ENCODE measurements at regions of chr12 and their contacts with region 1.

Region 1: GRCh38 chr12:101939856-101940265 is 62.5 kb downstream of the DRAM1 start:
- DNase-seq: peak; percentile 83
- ATAC-seq: peak; percentile 68
- H3K4me3 ChIP-seq: no peak overlapping the region
- H3K27ac ChIP-seq: no peak overlapping the region
- H3K4me1 ChIP-seq: peaks cover 13% of the 10 kb centered on the region
- H3K27me3 ChIP-seq: no peaks in the 10 kb centered on the region
- CTCF ChIP-seq: peak; percentile 94
- POLR2A ChIP-seq: no peak
- RAD21 ChIP-seq: peak; percentile 92

Region 2: GRCh38 chr12:101773650-101774162 is 166.2 kb before region 1 on chr12:
- CTCF ChIA-PET with region 1: no interaction called
- POLR2A ChIA-PET with region 1: no interaction called
- dilution Hi-C with region 1: no loop called
- in situ Hi-C with region 1: no loop called
- intact Hi-C with region 1: loop called (anchors 1 kb)
- DNase-seq: peak; percentile 75
- ATAC-seq: peak; percentile 98
- H3K4me3 ChIP-seq: no peak overlapping the region
- H3K27ac ChIP-seq: no peak overlapping the region
- H3K4me1 ChIP-seq: peaks cover 2% of the 10 kb centered on the region; the same call in 1 of the 2 replicates
- H3K27me3 ChIP-seq: no peaks in the 10 kb centered on the region
- CTCF ChIP-seq: peak; percentile 97
- POLR2A ChIP-seq: no peak
- RAD21 ChIP-seq: peak; percentile 93

Region 3: GRCh38 chr12:102033991-102034745 is 94.3 kb after region 1 on chr12:
- CTCF ChIA-PET with region 1: no interaction called
- POLR2A ChIA-PET with region 1: no interaction called
- dilution Hi-C with region 1: no loop called
- in situ Hi-C with region 1: no loop called
- intact Hi-C with region 1: no loop called
- DNase-seq: peak; percentile 58
- ATAC-seq: no peak
- H3K4me3 ChIP-seq: no peak overlapping the region
- H3K27ac ChIP-seq: no peak overlapping the region
- H3K4me1 ChIP-seq: no peaks in the 10 kb centered on the region
- H3K27me3 ChIP-seq: no peaks in the 10 kb centered on the region
- CTCF ChIP-seq: no peak
- POLR2A ChIP-seq: no peak
- RAD21 ChIP-seq: no peak

Region 4: DNA sequence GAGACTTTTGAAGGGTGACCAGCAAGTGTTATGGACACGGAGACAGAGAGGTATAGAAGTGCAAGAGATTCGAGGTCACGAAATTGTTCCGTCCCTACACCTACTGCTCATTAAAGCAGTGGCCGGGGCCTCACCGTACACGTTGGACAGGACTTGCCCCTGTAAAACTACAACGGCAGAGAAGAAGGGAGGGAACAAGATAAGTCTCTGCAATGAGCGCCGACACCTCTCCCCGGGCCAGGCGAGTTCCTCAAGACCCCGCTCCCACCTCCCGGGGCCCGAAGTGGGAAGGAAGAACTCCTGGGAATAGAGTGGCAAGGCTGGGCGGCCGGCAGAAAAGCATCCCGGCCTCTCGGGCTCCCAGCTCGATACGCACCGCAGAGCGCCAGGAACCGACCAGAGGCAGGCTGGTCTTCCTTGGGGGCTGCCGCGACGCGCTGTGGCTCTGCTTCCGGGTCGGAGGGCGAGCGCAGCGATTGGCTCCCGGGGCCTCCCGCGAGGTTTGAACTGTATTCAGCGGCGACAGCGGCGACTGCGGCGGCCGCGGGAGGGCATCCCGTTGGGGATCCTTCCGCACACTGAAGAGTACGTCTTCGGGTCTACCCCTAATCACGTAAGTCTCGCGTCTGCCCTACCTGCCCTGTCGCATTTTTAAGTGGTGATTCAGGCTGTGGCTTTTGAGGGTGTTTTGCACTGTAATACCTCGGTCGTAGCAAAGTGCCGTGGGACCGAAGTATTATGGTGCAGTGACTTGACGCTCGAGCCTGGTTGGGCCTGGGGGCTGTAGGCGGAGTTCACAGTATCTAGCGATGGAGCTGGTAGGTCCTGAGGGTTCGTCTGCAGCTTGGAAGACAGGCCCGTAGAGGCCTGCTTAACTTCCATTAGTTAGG is 180.1 kb after region 1 on chr12 and contains the starts of genes NUP37 and PARPBP:
- CTCF ChIA-PET with region 1: interaction called, 5 read pairs
- POLR2A ChIA-PET with region 1: interaction called, 3 read pairs
- dilution Hi-C with region 1: no loop called
- in situ Hi-C with region 1: no loop called
- intact Hi-C with region 1: loop called (anchors 1 kb)
- DNase-seq: peak; percentile 81
- ATAC-seq: peak; percentile 98
- H3K4me3 ChIP-seq: peak within 1 kb of the TSS; percentile 86
- H3K27ac ChIP-seq: peak within 1 kb of the TSS; percentile 75
- H3K4me1 ChIP-seq: peaks cover 4% of the 10 kb centered on the region; the same call in 1 of the 2 replicates
- H3K27me3 ChIP-seq: no peaks in the 10 kb centered on the region
- CTCF ChIP-seq: no peak
- POLR2A ChIP-seq: peak; percentile 77
- RAD21 ChIP-seq: no peak
- total RNA-seq, gene NUP37: 55.0 and 71.9 TPM in 2 replicates
- total RNA-seq, gene PARPBP: 7.2 and 15.6 TPM in 2 replicates

Region 5: DNA sequence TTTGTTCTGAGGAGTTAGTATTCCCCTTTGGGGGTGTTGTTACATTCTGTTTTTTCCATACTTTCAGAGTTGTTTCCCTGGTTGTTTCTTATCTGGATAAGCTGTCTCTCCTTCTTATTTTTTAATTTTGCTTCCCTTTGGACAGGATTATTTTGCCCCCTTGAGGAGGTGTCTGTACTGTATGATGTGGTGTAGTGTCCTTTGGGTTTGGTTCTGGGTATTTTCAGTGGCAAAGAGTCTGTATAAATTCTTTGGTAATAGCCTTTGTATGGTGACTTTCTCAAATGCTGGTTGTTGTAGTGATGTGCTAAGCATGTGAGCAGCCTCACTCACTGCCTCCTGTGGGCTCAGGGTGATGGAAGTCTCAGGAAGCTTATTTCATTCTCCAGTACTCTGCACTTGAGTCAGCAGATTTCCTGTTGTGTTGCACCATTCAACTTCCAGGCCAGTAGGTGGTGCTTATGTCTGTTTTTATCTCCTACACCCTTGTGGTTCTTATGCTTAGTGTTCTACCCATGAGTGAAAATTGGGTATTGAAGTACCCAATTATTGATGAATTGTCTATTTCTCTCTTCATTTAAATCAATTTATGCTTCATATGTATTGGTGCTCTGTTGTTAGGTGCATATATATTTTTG is 361.1 kb after region 1 on chr12:
- CTCF ChIA-PET with region 1: no interaction called
- POLR2A ChIA-PET with region 1: no interaction called
- dilution Hi-C with region 1: no loop called
- in situ Hi-C with region 1: no loop called
- intact Hi-C with region 1: loop called (anchors 5 kb)
- DNase-seq: peak; percentile 73
- ATAC-seq: peak; percentile 80
- H3K4me3 ChIP-seq: no peak overlapping the region
- H3K27ac ChIP-seq: no peak overlapping the region
- H3K4me1 ChIP-seq: no peaks in the 10 kb centered on the region
- H3K27me3 ChIP-seq: no peaks in the 10 kb centered on the region
- CTCF ChIP-seq: peak; percentile 57
- POLR2A ChIP-seq: no peak
- RAD21 ChIP-seq: peak; percentile 65

Region 6: DNA sequence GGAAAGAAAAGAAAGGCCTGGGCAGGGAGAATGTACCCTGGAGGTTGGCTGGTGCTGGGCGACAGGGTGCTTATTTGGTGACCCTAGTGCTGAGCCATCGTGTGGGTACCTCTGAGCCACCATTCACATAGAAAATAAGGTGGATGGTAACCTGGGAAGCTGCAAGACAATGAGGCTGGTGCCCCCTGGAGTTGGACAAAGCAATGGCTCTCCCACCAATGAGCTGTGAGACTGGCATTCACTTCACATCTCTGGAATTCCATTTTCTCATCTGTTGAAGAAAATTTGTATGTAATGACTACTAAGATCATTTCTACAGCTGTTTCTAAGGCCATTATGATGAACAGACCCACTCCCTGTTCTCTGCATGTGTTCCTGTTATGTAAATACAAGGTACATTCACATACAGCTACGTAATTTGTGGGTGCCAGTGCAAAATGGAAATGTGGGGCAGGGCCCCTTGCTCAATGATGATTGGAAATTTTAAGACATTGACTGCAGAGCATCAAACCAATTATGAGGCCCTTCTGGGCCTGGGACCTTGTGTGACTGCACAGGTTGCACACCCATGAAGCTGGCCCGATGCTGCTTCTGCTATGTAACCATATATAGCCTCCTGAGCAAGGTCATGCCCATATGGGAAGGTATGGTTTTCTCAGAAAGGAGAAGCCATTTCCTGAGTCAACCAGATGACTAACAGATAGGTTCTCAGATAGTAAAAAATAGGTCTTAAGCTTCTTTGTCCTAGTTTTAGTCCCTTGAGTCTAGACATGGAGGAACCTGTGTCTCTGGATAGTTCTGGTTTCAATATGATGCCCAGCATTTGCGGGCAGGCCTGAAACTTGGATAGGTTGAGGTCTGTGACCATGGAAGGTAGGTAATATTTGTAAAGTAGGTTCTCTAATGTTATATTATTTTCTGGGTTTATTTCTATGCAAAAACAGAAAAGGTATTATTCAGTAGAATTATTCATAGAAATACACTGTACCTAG is 603.9 kb after region 1 on chr12:
- CTCF ChIA-PET with region 1: interaction called, 3 read pairs
- POLR2A ChIA-PET with region 1: no interaction called
- dilution Hi-C with region 1: no loop called
- in situ Hi-C with region 1: no loop called
- intact Hi-C with region 1: loop called (anchors 5 kb)
- DNase-seq: peak; percentile 28
- ATAC-seq: no peak; the same call in 1 of the 2 replicates
- H3K4me3 ChIP-seq: no peak overlapping the region
- H3K27ac ChIP-seq: no peak overlapping the region
- H3K4me1 ChIP-seq: peaks cover 18% of the 10 kb centered on the region
- H3K27me3 ChIP-seq: no peaks in the 10 kb centered on the region
- CTCF ChIP-seq: no peak; the same call in 1 of the 2 replicates
- POLR2A ChIP-seq: no peak
- RAD21 ChIP-seq: 0 out of 2 replicates have a peak, but pooled peaks have one; percentile 29

Region 7: DNA sequence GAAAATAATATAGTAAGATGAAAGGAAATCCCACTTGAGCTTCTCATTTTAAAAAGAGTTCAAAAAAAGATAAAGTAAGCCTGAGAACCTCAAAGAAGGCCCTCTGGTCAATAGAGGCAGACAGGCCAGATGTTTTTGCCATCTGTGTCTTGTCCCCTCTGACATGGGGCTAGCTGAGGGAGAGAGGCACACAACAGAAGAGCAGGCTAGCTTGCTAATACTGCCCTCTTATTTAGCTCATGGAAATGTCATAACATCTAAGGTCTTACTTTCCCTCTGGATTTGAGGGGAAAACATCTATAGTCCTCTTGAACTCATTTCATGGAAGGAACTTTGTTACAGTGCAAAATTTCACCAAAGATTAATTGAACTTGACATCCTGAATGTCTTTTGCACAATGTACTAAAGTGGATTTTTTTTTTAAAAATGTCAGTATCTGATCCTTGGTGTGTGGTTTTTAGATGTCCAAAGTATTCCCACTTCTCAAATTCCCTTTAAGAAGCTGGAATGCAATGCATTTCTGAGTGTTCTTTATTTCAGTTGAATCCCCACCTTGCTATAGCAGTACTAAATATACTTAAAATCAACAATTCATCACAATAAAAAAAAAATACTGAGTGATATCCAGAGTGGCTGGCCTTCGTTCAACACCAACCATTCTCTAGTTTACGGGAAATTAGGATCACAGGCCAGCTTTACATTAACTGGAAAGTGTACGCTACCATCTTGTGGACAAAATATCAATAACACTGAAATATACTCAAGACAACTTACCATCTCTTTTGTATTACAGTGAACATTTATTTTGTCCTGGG is 800.5 kb after region 1 on chr12:
- CTCF ChIA-PET with region 1: interaction called, 5 read pairs
- POLR2A ChIA-PET with region 1: no interaction called
- dilution Hi-C with region 1: no loop called
- in situ Hi-C with region 1: no loop called
- intact Hi-C with region 1: loop called (anchors 1 kb)
- DNase-seq: peak; percentile 36
- ATAC-seq: peak; percentile 68; the same call in 1 of the 2 replicates
- H3K4me3 ChIP-seq: no peak overlapping the region
- H3K27ac ChIP-seq: no peak overlapping the region
- H3K4me1 ChIP-seq: no peaks in the 10 kb centered on the region
- H3K27me3 ChIP-seq: no peaks in the 10 kb centered on the region
- CTCF ChIP-seq: peak; percentile 46
- POLR2A ChIP-seq: no peak
- RAD21 ChIP-seq: peak; percentile 63

Region 8: DNA sequence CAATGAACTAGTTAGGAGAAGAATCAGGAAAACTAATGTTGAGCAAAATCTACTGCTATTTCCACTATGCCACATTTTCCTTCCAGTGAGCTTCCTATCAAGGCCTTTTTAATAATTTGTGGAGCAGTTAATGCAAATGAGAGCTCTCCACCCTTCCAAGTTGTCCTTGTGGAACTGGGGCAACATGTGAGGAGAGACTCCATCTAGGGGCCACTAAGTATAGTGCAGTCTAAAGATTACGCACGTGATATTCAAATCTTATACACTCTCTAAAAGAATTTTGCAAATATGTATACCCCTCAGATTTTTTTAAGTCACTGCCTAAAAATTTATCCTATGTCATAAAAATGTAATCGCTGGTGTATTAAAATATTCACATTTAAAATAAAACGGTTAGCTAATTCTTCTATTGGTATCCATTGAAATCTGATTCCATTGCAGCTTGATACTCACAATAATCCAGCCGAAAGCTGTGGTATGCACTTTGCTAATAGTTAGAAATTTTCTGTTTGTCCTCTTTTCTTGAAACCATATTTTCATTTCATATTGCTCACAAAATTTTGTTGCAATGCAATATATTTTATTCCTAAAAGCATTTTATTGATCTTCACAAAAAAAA is 877.1 kb after region 1 on chr12:
- CTCF ChIA-PET with region 1: interaction called, 3 read pairs
- POLR2A ChIA-PET with region 1: no interaction called
- dilution Hi-C with region 1: no loop called
- in situ Hi-C with region 1: no loop called
- intact Hi-C with region 1: loop called (anchors 1 kb)
- DNase-seq: peak; percentile 29
- ATAC-seq: peak; percentile 88
- H3K4me3 ChIP-seq: no peak overlapping the region
- H3K27ac ChIP-seq: no peak overlapping the region
- H3K4me1 ChIP-seq: no peaks in the 10 kb centered on the region
- H3K27me3 ChIP-seq: no peaks in the 10 kb centered on the region
- CTCF ChIP-seq: peak; percentile 54
- POLR2A ChIP-seq: no peak
- RAD21 ChIP-seq: peak; percentile 44